Natural killer cell (primary cell): ENCODE measurements at regions of chr20 and their contacts with region 1.

Region 1: GRCh38 chr20:59495894-59496510 is 108.3 kb upstream of the PHACTR3 start:
- DNase-seq: peak; percentile 58 to 78
- ATAC-seq: peak; percentile 30 to 74 (median 47)
- H3K4me3 ChIP-seq: no peak overlapping the region
- H3K4me3 Mint-ChIP-seq: no peak overlapping the region
- H3K27ac ChIP-seq: no peak overlapping the region
- H3K27ac Mint-ChIP-seq: no peak overlapping the region
- H3K4me1 ChIP-seq: no peaks in the 10 kb centered on the region
- H3K4me1 Mint-ChIP-seq: no peaks in the 10 kb centered on the region
- H3K27me3 ChIP-seq: peaks cover 2% of the 10 kb centered on the region
- H3K27me3 Mint-ChIP-seq: peaks cover 10 to 28% of the 10 kb centered on the region in 2 donors
- CTCF ChIP-seq: peak; percentile 93

Region 2: DNA sequence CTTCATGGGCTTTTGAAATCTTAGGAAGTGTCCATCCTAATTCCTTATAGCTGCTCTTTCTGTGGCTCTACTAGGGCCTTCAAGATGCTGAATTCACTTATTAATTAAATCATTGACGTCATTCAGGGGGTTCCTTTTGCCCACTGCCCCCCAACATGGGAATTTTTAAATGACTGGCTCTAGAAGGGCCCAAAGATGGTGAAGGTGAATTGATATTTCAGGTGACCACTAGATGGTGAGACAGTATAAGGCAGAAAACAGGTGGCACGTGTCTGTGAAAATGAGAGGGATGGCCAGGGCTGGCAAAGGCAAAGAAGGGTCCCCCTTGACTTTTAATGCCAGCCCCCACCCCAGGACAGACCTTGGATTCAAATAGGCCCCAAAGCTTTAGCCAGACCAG is 631.7 kb before region 1 on chr20:
- intact Hi-C with region 1: loop called (anchors 2 kb)
- DNase-seq: peak in 1 of 2 donors; percentile 58
- ATAC-seq: peak in 1 of 3 donors; percentile 52
- H3K4me3 ChIP-seq: no peak overlapping the region
- H3K4me3 Mint-ChIP-seq: no peak overlapping the region
- H3K27ac ChIP-seq: no peak overlapping the region
- H3K27ac Mint-ChIP-seq: no peak overlapping the region
- H3K4me1 ChIP-seq: no peaks in the 10 kb centered on the region
- H3K4me1 Mint-ChIP-seq: no peaks in the 10 kb centered on the region
- H3K27me3 ChIP-seq: no peaks in the 10 kb centered on the region
- H3K27me3 Mint-ChIP-seq: peaks cover 23 to 43% of the 10 kb centered on the region in 2 donors
- CTCF ChIP-seq: peak; percentile 19

Region 3: DNA sequence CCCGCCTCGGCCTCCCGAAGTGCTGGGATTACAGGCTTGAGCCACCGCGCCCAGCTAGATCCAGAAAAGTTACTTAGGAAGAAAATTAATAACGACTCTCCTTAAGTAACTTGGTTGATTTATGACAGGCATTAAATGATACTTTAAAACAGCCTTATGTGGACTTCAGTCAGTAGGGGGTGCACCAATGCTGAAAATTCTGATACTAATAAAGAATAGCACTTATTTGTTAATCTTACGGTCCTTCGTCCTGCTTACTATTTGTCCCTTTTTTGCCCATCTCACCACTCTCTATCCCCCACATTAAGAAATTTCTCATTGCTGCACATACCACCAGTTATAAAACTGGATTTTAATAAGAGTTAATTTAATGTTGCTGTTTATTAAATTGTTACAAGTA is 440.7 kb before region 1 on chr20:
- intact Hi-C with region 1: loop called (anchors 5 kb)
- DNase-seq: peak in 1 of 2 donors; percentile 61
- ATAC-seq: no peak
- H3K4me3 ChIP-seq: no peak overlapping the region
- H3K4me3 Mint-ChIP-seq: no peak overlapping the region
- H3K27ac ChIP-seq: no peak overlapping the region
- H3K27ac Mint-ChIP-seq: no peak overlapping the region
- H3K4me1 ChIP-seq: no peaks in the 10 kb centered on the region
- H3K4me1 Mint-ChIP-seq: no peaks in the 10 kb centered on the region
- H3K27me3 ChIP-seq: peaks cover 13% of the 10 kb centered on the region
- H3K27me3 Mint-ChIP-seq: peaks cover 19 to 56% of the 10 kb centered on the region in 2 donors
- CTCF ChIP-seq: no peak